Posterior cingulate gyrus (tissue), 11 donors: ENCODE measurements at regions of chr6 and their contacts with region 1.

Region 1: DNA sequence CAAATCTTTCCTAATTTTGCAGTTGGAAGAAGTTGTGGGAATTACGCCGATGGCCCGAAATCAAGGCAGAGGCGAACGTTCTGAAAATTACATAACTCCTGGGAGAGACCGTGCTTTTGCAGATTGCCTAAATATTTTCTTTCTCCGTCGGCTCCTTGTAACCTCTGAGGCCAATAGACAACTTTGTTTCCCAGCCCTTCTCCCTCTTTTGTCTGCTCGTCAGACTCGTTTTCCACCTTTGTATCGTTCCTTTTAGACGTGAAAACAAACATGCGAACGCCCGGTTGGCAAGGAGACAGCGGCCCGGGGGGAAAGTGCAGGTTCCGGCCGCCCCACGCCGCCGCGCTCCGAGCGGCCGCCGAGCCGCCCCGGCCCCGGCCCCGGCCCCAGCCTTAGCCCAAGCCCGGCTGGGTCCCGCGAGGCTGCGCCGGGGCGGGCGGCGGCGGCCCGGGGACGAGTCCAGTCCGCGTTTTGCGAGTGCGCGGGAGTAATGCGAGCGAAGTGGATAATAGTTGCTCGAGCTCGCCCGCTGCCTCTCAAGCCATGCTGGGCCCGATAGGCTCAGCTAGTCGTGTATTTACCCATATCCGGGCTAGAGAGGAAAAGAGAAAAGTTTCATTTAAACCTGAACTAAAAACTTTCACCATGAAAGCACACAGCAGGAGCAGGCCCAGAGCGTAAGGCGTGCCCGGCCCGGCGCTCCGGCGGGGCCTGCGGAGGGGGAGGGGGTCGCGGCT is at the start of gene ARID1B:
- DNase-seq: peak; percentile 69 to 96 (median 79)

Region 2: DNA sequence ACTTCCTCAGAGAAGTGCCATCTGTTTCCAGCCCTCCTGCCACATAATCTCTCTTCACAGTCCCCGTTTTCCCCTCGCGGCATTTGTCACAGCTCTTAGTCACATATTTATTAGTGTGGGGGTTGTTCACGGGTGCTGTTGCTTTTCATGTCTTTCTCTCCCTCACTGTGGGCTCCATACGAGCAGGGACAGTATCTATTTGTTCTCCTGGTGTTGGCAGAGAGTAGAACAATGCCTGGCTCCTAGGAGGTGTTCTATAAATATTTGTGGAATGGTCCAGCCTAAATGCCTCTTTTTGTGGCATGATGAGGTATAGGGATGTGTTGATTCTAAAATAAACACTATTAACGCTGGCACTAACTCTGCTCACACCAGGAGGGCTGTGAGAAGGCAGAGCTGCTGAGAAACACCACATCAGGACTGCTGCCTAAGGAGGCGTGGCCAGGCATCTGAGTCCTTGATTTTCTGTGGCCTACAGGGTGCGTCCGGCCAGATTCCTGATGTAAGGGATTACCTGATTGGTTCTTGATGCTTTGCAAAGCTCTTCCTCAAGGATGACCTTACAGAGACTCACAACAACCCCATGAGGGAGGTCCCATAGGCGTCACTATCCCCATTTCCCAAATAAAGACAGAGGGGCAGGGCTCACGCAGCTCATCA is 219.6 kb before region 1 on chr6:
- intact Hi-C with region 1: loop called (anchors 10 kb)
- DNase-seq: peak; percentile 15 to 93 (median 60)

Region 3: GRCh38 chr6:156953479-156954146 is 176.6 kb after region 1 on chr6:
- intact Hi-C with region 1: loop called (anchors 10 kb)
- DNase-seq: no peak

Region 4: DNA sequence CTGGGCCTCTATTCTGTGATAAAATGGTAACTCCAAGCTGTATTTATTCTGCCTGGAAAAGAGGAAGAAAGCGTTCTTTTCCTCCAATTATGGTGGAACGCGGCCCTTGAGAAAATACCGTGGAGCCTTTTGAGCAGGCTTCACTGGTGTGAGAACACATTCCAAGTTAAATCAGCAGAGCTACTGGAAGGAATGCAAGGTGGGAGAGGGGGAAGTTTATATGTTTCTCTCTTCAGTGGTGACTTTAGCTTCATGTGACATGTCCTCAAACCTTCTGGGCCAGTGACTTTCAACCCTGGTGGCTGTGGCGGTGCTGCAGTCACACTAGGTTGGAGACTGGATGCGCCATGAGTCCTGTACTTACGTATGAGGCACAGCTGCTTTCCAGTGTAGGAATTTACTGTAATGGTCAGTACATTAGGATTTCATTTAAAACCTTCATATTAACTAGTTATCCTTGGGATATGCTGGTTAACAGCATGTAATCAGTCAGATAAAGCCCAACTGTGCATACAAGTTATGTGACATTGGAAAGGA is 221.9 kb after region 1 on chr6:
- intact Hi-C with region 1: no loop called
- DNase-seq: no peak